ENCODE measurements at regions of chr17 and their contacts with region 1.

Region 1: GRCh38 chr17:35312790-35313711 is 60.4 kb downstream of the SLFN11 start:
- DNase-seq: peak; percentile 76
- ATAC-seq: peak; percentile 90
- H3K4me3 Mint-ChIP-seq: peak overlapping the region; percentile 96
- H3K27ac Mint-ChIP-seq: peak overlapping the region; percentile 94
- H3K4me1 Mint-ChIP-seq: peaks cover 28% of the 10 kb centered on the region
- H3K27me3 Mint-ChIP-seq: peaks cover 5% of the 10 kb centered on the region

Region 2: GRCh38 chr17:35291802-35292201 is 21.2 kb before region 1 on chr17:
- POLR2A ChIA-PET with region 1: no interaction called
- DNase-seq: no peak
- ATAC-seq: no peak
- H3K4me3 Mint-ChIP-seq: no peak overlapping the region
- H3K27ac Mint-ChIP-seq: no peak overlapping the region
- H3K4me1 Mint-ChIP-seq: peaks cover 15% of the 10 kb centered on the region
- H3K27me3 Mint-ChIP-seq: no peaks in the 10 kb centered on the region

Region 3: DNA sequence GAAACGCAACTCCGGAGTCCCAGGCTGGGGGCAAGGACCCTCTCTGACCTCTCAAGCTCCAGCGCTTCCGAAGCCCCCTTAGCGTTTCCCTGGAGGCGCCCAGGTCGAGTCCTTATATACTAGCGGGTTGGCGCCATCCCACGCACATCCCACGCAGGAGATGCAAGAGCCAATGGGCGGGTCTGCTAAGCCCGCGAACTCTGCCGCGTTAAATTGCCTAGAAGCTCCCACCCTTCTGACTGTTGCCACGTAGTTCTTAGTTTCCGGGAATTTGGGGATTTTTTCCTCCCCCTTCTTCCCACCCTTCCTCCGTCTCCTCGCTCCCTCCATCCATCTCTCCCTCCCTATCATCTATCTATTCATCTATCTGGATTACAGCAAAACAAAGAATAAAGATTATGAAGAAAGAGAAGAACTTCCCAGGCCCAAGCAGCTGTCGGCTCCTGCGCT is 60.5 kb after region 1 on chr17 and contains the start of gene SLFN11:
- POLR2A ChIA-PET with region 1: interaction called, 17 read pairs
- DNase-seq: peak; percentile 77
- ATAC-seq: peak; percentile 76
- H3K4me3 Mint-ChIP-seq: peak within 1 kb of the TSS; percentile 94
- H3K27ac Mint-ChIP-seq: peak within 1 kb of the TSS; percentile 95
- H3K4me1 Mint-ChIP-seq: peaks cover 38% of the 10 kb centered on the region
- H3K27me3 Mint-ChIP-seq: peaks cover 12% of the 10 kb centered on the region
- total RNA-seq, gene SLFN11: 44.1 to 47.5 TPM

Region 4: DNA sequence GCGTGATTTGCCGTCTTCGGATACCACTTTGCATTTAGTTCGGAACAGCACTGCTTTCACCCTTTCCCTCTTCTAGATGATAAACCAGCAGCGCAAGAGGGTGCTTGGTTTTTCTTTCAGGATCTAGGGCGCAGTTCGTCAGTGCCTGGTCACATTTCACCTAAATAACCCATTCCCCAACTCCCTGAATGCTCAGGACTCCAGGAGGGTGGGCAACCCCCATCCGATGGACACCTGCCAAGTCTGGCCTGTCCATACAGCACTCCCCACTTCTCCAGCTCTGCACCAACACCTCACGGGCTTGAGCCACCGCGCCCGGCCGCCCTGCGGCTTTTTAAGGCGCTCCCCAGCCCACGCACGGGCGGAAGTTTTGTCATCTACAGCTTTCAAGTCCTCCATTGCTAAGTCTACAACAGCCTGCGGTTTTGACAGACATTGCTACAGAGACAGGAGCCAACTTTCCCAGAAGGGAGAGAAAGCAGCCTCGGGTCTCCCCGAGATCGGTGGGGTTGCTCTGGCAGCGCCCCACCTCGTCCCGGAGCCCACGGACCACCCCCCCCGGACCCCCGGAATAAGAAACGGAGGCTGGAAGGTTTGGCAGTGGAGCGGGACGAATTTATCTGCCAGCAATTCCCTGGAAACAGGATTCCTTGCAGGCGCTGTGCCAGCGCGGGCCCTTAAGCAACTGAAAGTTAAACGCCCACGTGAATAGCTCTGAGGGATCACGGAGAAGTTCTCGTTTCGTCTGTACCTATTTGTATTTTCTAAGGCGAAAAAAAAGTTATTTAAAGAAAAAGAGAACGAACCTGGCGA is 174.1 kb after region 1 on chr17:
- POLR2A ChIA-PET with region 1: interaction called, 10 read pairs
- DNase-seq: peak; percentile 67
- ATAC-seq: peak; percentile 63
- H3K4me3 Mint-ChIP-seq: peak overlapping the region; percentile 78
- H3K27ac Mint-ChIP-seq: peak overlapping the region; percentile 87
- H3K4me1 Mint-ChIP-seq: peaks cover 58% of the 10 kb centered on the region
- H3K27me3 Mint-ChIP-seq: no peaks in the 10 kb centered on the region

Region 5: DNA sequence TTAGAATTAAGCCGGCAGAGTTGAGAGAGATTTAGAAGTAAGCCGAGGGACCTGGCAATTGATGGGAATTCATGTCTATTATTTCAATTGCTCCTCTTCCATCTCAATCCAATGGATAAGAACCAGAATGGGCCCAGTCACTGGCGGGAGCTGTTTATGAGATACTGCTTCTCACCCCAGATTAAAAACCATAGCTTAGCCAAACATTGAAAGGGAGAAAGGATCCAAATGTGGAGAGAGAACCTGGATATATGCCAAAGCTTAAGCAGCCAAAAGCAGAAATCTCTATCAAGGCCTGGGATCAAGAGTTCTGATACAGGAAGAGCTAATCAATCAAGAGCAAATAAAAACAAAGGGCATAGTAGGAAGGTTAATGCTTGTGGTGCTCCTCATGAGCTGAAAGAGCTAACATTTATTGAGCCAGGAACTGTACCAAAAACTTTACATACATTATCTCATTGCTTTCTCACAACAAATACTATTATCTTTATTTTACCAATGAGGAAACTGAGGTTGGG is 221.6 kb after region 1 on chr17:
- POLR2A ChIA-PET with region 1: interaction called, 26 read pairs
- DNase-seq: no peak
- ATAC-seq: no peak
- H3K4me3 Mint-ChIP-seq: peak overlapping the region; percentile 94
- H3K27ac Mint-ChIP-seq: peak overlapping the region; percentile 99
- H3K4me1 Mint-ChIP-seq: peaks cover 48% of the 10 kb centered on the region
- H3K27me3 Mint-ChIP-seq: no peaks in the 10 kb centered on the region